Activated CD4-positive, alpha-beta memory T cell treated with anti-CD3 and anti-CD28 coated beads for 36 hours (primary cell): ENCODE measurements at regions of chr4 and their contacts with region 1.

Region 1: DNA sequence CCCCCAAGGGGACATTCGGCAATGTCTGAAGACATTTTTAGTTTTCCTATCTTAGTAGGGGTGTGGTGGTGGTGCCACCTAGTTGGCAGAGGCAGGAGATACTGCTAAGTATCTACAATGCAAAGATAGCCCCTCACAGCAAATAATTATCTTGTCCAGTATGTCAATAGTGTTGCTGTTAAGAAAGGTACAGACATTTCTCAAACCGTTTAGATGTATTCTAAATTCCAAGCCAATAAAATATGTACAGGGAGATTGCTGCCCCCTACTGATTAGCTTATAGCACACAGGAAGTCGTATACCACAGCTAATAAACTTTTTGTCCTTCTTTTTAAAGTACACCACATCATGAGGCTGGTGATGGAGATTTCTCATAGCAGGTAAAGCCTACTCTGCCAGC is 260.5 kb downstream of the TMA16 start:
- DNase-seq: no peak
- H3K4me3 Mint-ChIP-seq: no peak overlapping the region
- H3K27ac Mint-ChIP-seq: no peak overlapping the region
- H3K4me1 Mint-ChIP-seq: no peaks in the 10 kb centered on the region
- H3K27me3 Mint-ChIP-seq: peaks cover 2% of the 10 kb centered on the region

Region 2: GRCh38 chr4:164012396-164013027 is 257.5 kb after region 1 on chr4:
- CTCF ChIA-PET with region 1: no interaction called
- POLR2A ChIA-PET with region 1: no interaction called
- intact Hi-C with region 1: loop called (anchors 10 kb)
- DNase-seq: peak; percentile 29
- H3K4me3 Mint-ChIP-seq: no peak overlapping the region
- H3K27ac Mint-ChIP-seq: no peak overlapping the region
- H3K4me1 Mint-ChIP-seq: peaks cover 7% of the 10 kb centered on the region
- H3K27me3 Mint-ChIP-seq: no peaks in the 10 kb centered on the region